Cardiac septum (tissue), 1 donor: ENCODE measurements at regions of chr5 and their contacts with region 1.

Region 1: GRCh38 chr5:11153670-11154377 is 392.8 kb upstream of the DAP start:
- DNase-seq: no peak

Region 2: GRCh38 chr5:11023945-11024344 is 129.9 kb before region 1 on chr5:
- intact Hi-C with region 1: loop called (anchors 2 kb)
- DNase-seq: no peak